GM10248 (cell line): ENCODE measurements at regions of chr6 and their contacts with region 1.

Region 1: GRCh38 chr6:105573138-105573537 is 170.3 kb upstream of the PREP start:
- DNase-seq: no peak
- CTCF ChIP-seq: no peak

Region 2: DNA sequence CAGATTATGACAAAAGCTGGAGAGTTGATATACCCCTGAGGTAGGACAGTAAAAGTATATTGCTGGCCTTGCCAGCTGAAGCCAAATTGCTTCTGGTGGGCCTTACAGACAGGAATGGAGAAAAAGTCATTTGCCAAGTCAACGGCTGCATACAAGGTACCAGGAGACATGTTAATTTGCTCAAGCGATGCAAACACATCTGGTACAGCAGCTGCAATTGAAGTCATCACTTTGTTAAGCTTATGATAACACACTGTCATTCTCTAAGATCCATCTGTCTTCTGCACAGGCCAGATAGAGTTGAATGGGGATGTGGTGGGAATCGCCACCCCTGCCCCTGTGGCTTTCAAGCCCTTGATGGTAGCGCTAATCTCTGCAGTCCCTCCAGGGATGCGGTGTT is 353.0 kb before region 1 on chr6:
- CTCF ChIA-PET with region 1: no interaction called
- POLR2A ChIA-PET with region 1: no interaction called
- DNase-seq: no peak
- CTCF ChIP-seq: no peak

Region 3: DNA sequence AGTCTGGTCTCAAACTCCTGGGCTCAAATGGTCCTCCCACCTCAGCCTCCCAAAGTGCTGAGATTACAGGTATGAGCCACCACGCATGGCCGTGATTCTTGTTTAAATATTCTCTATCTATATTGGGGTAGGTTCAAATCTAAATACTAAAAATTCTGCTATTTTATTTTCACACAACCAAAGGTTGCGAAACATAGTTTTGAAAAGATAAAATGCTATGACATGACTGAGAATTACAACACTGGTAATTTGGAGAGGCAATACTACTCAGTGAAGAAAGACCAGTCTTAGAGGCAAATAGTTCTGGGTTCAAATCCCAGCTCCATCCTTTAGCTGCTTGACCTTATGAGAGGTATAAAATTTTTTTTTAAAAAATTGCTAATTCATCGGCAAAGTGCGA is 33.3 kb before region 1 on chr6:
- CTCF ChIA-PET with region 1: no interaction called
- POLR2A ChIA-PET with region 1: no interaction called
- DNase-seq: no peak
- CTCF ChIP-seq: no peak

Region 4: GRCh38 chr6:105560611-105561066 is 12.5 kb before region 1 on chr6:
- CTCF ChIA-PET with region 1: interaction called, 12 read pairs
- POLR2A ChIA-PET with region 1: no interaction called
- DNase-seq: peak; percentile 43
- CTCF ChIP-seq: no peak

Region 5: GRCh38 chr6:105587349-105588122 is 14.4 kb after region 1 on chr6:
- CTCF ChIA-PET with region 1: interaction called, 24 read pairs
- POLR2A ChIA-PET with region 1: no interaction called
- DNase-seq: no peak
- CTCF ChIP-seq: no peak

Region 6: GRCh38 chr6:105598264-105598663 is 25.1 kb after region 1 on chr6:
- CTCF ChIA-PET with region 1: no interaction called
- POLR2A ChIA-PET with region 1: no interaction called
- DNase-seq: no peak
- CTCF ChIP-seq: no peak